Lower leg skin (tissue), 4 donors: ENCODE measurements at regions of chr10 and their contacts with region 1.

Region 1: DNA sequence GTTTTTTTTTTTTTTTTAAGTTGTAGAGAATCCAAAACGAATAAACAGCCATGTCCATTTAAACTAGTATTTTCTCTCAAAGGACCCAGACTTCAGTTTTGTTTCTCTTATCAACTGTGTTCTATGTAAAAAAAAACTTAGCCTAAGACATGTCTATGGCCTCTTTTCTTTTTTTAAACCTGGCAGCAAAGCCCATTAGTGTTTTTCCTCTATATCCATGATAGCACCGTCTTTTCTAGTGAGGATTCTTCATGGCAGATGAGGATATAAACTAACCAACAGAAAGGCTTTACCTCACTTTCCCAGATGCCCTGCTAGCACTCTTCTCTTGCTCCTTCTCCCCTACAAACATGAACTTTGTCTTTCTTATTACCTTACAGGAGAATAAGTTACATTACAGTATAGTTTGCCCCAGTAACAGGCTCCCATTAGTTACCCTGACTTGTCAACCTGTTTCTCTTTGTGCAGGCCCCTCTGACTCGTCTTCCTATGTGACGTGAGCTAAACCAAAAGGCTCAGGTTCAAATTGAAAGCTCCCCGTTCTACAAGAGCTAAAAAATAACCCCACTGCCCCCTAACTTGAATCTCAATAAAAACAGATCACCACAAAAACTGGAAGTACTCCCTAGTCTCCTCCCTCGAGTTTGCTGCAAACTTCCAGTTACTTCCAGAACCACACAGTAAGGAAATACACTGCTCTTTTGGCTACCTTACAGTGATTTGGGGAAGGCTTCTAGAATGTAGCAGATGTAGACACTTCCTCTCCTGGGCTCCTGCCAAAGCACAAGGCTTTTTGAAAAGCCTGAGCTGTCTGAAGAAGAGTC is 20.1 kb downstream of the P4HA1 start:
- DNase-seq: peak in 1 of 2 donors; percentile 68
- H3K4me3 ChIP-seq: no peak overlapping the region
- CTCF ChIP-seq: no peak
- POLR2A ChIP-seq: no peak

Region 2: GRCh38 chr10:73159038-73159648 is 82.6 kb after region 1 on chr10:
- intact Hi-C with region 1: loop called (anchors 10 kb)
- DNase-seq: peak; percentile 46 to 88
- H3K4me3 ChIP-seq: no peak overlapping the region
- CTCF ChIP-seq: no peak
- POLR2A ChIP-seq: no peak